ENCODE measurements at regions of chr6 and their contacts with region 1.

Region 1: GRCh38 chr6:152267967-152268845 is 369.0 kb downstream of the SYNE1 start:
- DNase-seq: peak; percentile 45
- ATAC-seq: no peak
- H3K4me3 ChIP-seq: no peak overlapping the region
- H3K27ac ChIP-seq: no peak overlapping the region
- H3K4me1 ChIP-seq: no peaks in the 10 kb centered on the region
- H3K27me3 ChIP-seq: no peaks in the 10 kb centered on the region
- CTCF ChIP-seq: peak; percentile 68
- EP300 ChIP-seq: no peak
- POLR2A ChIP-seq: no peak
- RAD21 ChIP-seq: peak; percentile 54; the same call in 1 of the 2 replicates

Region 2: GRCh38 chr6:151494235-151494935 is 773.8 kb before region 1 on chr6:
- CTCF ChIA-PET with region 1: no interaction called
- POLR2A ChIA-PET with region 1: no interaction called
- in situ Hi-C with region 1: no loop called
- intact Hi-C with region 1: loop called (anchors 10 kb)
- DNase-seq: peak; percentile 57
- ATAC-seq: peak; percentile 27
- H3K4me3 ChIP-seq: peak overlapping the region; percentile 95 to 99 (median 97)
- H3K27ac ChIP-seq: peak overlapping the region; percentile 86
- H3K4me1 ChIP-seq: peaks cover 63% of the 10 kb centered on the region
- H3K27me3 ChIP-seq: no peaks in the 10 kb centered on the region; a peak in 1 of 5 replicates
- CTCF ChIP-seq: no peak
- EP300 ChIP-seq: 0 out of 4 replicates have a peak, but pooled peaks of 1 of the 2 experiments have one; percentile 4
- POLR2A ChIP-seq: peak in 1 of 2 experiments; percentile 59; a peak in 1 of 4 replicates
- RAD21 ChIP-seq: no peak

Region 3: DNA sequence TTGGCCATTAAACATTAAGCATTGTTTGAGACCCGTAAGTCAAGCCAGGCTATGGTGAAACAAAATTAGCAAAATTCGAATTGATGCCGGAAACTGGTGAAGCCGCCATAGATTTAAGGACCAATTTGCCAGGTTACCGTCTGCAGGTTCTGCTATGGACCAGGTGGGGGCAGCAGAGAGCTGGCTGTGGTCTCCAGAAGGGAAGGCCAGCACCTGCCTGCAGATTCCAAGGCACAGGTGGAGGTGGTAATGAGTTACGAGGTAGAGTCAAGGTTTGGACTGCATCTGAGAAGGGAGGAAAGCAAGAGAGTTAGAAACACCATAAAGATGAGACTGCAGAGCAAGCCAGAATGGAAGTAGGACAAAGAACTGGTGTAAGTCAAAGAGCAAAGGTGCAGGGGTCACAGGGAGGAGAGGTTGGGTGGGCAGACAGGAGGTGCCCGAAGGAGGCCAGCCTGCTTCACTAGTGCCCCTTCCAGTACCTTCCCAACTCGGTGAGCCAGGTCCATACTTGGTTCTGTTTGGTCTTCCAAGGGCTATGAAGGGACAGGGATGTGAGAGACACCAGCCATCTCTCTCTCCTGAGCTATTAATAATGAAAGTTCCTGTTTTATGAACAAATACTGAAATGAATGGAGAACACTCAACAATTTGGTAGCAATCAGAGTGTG is 592.3 kb before region 1 on chr6:
- CTCF ChIA-PET with region 1: interaction called, 6 read pairs
- POLR2A ChIA-PET with region 1: no interaction called
- in situ Hi-C with region 1: no loop called
- intact Hi-C with region 1: loop called (anchors 1 kb)
- DNase-seq: peak; percentile 64
- ATAC-seq: peak; percentile 93
- H3K4me3 ChIP-seq: no peak overlapping the region
- H3K27ac ChIP-seq: no peak overlapping the region
- H3K4me1 ChIP-seq: peaks cover 26% of the 10 kb centered on the region
- H3K27me3 ChIP-seq: no peaks in the 10 kb centered on the region; a peak in 1 of 5 replicates
- CTCF ChIP-seq: peak; percentile 98
- EP300 ChIP-seq: no peak
- POLR2A ChIP-seq: no peak
- RAD21 ChIP-seq: peak; percentile 95

Region 4: GRCh38 chr6:151993364-151993763 is 274.8 kb before region 1 on chr6:
- CTCF ChIA-PET with region 1: no interaction called
- POLR2A ChIA-PET with region 1: no interaction called
- in situ Hi-C with region 1: no loop called
- intact Hi-C with region 1: no loop called
- DNase-seq: no peak
- ATAC-seq: no peak
- H3K4me3 ChIP-seq: no peak overlapping the region
- H3K27ac ChIP-seq: no peak overlapping the region
- H3K4me1 ChIP-seq: no peaks in the 10 kb centered on the region
- H3K27me3 ChIP-seq: peaks cover 0 to 6% of the 10 kb centered on the region in 2 experiments; a peak in 2 of 5 replicates
- CTCF ChIP-seq: no peak
- EP300 ChIP-seq: no peak
- POLR2A ChIP-seq: no peak
- RAD21 ChIP-seq: no peak

Region 5: DNA sequence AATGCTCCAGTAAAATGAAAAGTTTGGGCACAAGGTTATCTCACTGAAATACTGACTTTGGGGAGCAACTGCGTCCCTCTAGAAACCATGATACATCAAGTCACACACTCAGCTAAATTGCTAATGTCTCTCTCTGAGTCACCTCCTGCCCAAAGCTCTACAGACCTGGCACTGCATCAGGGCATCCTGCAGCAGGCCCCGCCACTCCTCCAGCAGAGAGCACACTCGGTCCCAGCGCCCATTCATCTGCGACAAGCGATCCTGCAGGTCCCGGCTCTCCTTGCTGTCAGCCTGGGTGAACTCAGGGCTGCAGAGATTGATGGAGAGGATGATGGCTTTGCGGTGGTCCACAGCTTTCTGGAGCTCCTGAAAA is 131.8 kb before region 1 on chr6:
- CTCF ChIA-PET with region 1: no interaction called
- POLR2A ChIA-PET with region 1: no interaction called
- in situ Hi-C with region 1: no loop called
- intact Hi-C with region 1: loop called (anchors 5 kb)
- DNase-seq: no peak
- ATAC-seq: peak; percentile 91
- H3K4me3 ChIP-seq: no peak overlapping the region
- H3K27ac ChIP-seq: peak overlapping the region; percentile 8
- H3K4me1 ChIP-seq: peaks cover 19% of the 10 kb centered on the region
- H3K27me3 ChIP-seq: no peaks in the 10 kb centered on the region
- CTCF ChIP-seq: no peak
- EP300 ChIP-seq: no peak
- POLR2A ChIP-seq: no peak
- RAD21 ChIP-seq: no peak